ENCODE measurements at regions of chr10 and their contacts with region 1.

Region 1: DNA sequence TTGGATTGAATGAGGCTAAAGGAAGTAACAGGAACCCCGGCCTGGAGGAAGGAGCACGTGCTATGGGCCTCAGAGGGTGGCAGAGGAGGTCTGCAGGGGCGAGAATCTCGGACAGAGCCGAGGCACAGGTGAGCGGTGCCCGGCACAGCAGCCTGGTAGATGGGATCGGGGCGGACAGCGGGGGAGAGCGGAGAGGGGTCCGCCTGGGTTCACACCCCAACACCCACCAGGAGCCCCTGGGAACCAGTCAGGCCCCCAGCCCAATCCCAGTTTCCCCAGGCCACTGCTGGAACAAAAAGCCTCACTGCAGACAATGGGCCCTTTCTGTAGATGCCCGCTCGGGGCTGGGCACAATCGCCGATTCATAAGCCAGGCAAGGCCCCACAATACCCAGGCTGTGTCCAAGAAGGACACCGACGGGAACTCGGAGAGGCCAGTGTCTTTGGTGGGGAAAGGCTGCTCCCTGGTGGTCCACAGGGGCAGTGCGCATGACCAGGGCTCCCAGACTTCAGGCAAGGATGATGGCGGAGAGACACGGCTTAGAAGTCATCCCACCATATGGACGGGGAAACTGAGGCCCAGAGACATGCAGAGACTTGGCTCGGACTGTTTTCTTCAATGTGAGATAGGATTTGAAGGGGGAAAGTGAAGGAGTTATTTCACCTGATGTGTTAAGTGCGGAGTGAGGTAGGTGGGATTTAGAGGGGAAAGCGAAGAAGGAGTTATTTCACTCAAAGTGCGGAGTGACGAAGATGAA is 106.9 kb upstream of the GPR26 start:
- DNase-seq: peak; percentile 82
- H3K4me3 ChIP-seq: no peak overlapping the region
- H3K27ac ChIP-seq: no peak overlapping the region
- H3K4me1 ChIP-seq: no peaks in the 10 kb centered on the region
- H3K27me3 ChIP-seq: peaks cover 0 to 33% (median 0%) of the 10 kb centered on the region in 3 donors
- CTCF ChIP-seq: peak; percentile 83 to 97 (median 96)
- EP300 ChIP-seq: no peak
- POLR2A ChIP-seq: no peak

Region 2: DNA sequence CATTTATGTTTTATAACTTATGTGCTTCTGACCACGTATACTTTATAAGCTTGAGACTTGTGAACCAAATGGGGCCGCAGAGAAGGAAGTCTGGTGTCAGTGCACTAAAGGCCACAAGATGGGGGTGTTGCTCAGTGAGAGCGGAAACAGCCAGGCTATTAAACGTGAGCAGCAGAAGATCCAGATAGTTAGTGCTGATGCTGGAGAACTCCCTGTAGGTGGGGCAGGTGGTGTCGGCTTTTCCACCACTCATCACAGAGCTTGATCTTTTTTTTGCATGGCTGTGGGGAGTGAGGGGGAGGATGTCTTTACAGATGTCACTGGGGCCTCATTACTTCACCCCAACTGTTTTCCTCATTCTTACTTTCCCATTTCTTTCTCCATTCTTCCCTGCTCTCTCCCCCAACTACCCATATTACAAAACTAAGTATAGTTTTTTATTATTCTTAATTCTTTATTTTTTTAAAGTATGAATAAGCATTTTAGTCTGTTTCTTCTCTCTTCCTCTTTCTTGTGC is 515.8 kb before region 1 on chr10:
- intact Hi-C with region 1: loop called (anchors 5 kb)
- DNase-seq: no peak
- H3K4me3 ChIP-seq: no peak overlapping the region
- H3K27ac ChIP-seq: no peak overlapping the region
- H3K4me1 ChIP-seq: no peaks in the 10 kb centered on the region
- H3K27me3 ChIP-seq: no peaks in the 10 kb centered on the region
- CTCF ChIP-seq: peak in 3 of 4 experiments; percentile 29 to 56 (median 44)
- EP300 ChIP-seq: no peak
- POLR2A ChIP-seq: no peak

Region 3: GRCh38 chr10:123427392-123427791 is 131.9 kb before region 1 on chr10:
- intact Hi-C with region 1: no loop called
- DNase-seq: no peak
- H3K4me3 ChIP-seq: no peak overlapping the region
- H3K27ac ChIP-seq: no peak overlapping the region
- H3K4me1 ChIP-seq: no peaks in the 10 kb centered on the region
- H3K27me3 ChIP-seq: peaks cover 0 to 52% (median 5%) of the 10 kb centered on the region in 3 donors
- CTCF ChIP-seq: no peak
- EP300 ChIP-seq: no peak
- POLR2A ChIP-seq: no peak

Region 4: DNA sequence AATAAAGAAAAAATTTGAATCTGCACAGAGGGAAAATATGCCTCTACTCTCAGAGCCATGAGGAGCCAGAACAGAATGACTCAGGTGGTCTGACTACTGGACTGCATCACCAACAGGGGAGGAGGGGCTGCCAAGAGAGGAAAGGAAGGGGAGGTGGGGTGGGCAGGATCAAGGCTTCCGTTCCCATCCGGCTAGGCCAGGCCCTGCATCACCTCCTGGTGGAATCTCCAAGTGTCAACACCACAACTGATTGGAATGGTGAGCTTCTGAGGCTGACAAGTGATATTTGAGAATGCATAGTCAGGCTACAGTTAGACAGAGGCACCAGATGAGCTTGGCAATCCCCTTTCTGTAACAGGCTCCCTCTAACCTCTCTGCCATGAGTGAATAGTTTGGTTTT is 96.5 kb after region 1 on chr10:
- intact Hi-C with region 1: no loop called
- DNase-seq: peak; percentile 18
- H3K4me3 ChIP-seq: no peak overlapping the region
- H3K27ac ChIP-seq: no peak overlapping the region
- H3K4me1 ChIP-seq: no peaks in the 10 kb centered on the region
- H3K27me3 ChIP-seq: no peaks in the 10 kb centered on the region
- CTCF ChIP-seq: no peak
- EP300 ChIP-seq: no peak
- POLR2A ChIP-seq: no peak